ENCODE measurements at regions of chr19 and their contacts with region 1.

Region 1: DNA sequence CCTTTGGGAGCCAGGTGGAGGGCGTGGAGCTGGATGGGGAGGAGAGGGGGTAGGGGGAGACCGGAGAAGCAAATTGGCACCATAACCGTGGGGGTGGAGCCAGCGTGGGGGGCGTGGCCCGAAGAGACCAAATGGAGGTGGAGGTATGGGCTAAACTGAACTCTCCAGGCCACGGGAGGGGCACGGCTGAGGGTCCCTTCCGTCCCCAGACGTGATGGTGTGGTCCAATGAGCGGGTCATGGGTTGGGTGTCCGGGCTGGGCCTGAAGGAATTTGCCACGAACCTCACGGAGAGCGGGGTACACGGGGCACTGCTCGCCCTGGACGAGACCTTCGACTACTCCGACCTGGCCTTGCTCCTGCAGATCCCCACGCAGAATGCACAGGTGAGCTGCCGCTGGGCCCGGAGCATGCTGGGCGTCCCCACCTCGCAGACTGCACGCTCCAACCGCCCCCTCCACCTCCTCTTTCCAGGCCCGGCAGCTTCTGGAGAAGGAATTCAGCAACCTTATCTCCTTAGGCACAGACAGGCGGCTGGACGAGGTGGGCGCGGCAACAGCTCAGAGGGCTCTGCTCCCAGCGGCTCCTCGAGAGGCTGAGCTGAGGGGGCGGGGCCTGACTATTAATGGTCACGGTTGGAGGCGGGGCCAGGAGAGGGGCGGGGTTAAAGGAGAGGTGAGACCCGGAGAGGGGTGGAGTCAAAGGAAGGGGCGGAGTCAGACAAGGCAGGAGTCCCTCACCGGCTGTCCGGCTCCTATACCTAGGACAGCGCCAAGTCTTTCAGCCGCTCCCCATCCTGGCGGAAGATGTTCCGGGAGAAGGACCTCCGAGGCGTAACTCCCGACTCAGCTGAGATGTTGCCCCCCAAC is 6.2 kb downstream of the HRC start:
- DNase-seq: peak; percentile 97
- H3K4me3 ChIP-seq: peak overlapping the region; percentile 47 to 72 (median 64)
- H3K27ac ChIP-seq: peak overlapping the region; percentile 76 to 85 (median 79)
- H3K4me1 ChIP-seq: peaks cover 0 to 50% (median 43%) of the 10 kb centered on the region in 4 donors
- H3K27me3 ChIP-seq: peaks cover 0 to 2% (median 0%) of the 10 kb centered on the region in 3 donors
- CTCF ChIP-seq: no peak
- EP300 ChIP-seq: no peak
- POLR2A ChIP-seq: peak in 1 of 2 donors; percentile 74

Region 2: DNA sequence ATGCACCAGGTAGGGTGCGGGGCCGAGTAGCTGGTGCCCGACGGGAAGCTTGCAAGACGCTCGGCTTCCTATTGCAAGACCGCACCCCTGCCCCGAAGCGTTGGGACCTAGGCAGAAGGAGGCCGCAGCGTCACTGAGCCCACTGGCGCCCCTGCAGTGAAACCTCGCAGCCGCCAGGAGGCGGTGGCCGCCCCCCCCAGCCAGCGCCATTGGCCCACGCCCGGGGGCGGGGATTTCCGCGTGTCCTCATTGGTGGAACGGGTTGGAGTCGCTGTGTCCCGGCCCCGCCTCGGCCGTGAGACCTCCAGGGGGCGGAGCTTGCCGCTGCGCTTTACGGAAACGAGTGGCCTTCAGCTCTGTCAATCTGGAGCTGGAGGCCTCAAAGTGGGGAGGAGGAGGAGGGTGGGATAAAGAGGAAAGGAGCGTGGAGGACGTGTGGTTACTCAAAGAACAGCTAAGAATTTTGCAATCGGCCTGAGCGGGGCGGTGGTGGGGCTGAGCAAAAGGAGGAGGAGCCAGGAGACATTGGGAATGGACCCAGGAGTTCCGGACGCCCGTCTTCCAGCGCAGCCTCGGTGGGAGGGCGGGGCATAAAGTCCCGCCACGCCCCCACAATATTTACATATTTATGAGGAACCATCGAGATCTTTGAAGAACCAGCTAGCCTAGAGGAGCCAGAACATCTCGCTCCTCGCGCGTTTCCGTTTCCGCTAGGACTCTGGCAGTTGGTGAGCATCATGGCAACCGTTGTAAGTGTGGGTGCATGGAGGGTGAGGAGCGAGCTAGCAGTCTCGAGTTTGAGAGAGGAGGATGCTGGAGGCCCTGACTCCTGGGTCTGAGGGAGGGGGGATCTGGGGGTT is 155.6 kb before region 1 on chr19 and contains the starts of genes GYS1 and RUVBL2:
- intact Hi-C with region 1: loop called (anchors 5 kb)
- DNase-seq: peak; percentile 100
- H3K4me3 ChIP-seq: peak within 1 kb of the TSS; percentile 58 to 76 (median 67)
- H3K27ac ChIP-seq: peak within 1 kb of the TSS; percentile 88 to 97 (median 90)
- H3K4me1 ChIP-seq: peaks cover 0 to 42% (median 37%) of the 10 kb centered on the region in 4 donors
- H3K27me3 ChIP-seq: no peaks in the 10 kb centered on the region
- CTCF ChIP-seq: peak; percentile 96 to 99 (median 98)
- EP300 ChIP-seq: peak in 1 of 4 donors; percentile 66
- POLR2A ChIP-seq: peak; percentile 87 to 94
- total RNA-seq, gene GYS1: 11.7 to 19.4 (median 17.8) TPM
- total RNA-seq, gene RUVBL2: 49.3 to 82.3 (median 64.0) TPM

Region 3: GRCh38 chr19:49097455-49098288 is 51.3 kb before region 1 on chr19:
- intact Hi-C with region 1: loop called (anchors 1 kb)
- DNase-seq: peak; percentile 79
- H3K4me3 ChIP-seq: no peak overlapping the region
- H3K27ac ChIP-seq: peak overlapping the region in 1 of 4 donors; percentile 30
- H3K4me1 ChIP-seq: no peaks in the 10 kb centered on the region
- H3K27me3 ChIP-seq: no peaks in the 10 kb centered on the region
- CTCF ChIP-seq: peak; percentile 92 to 99 (median 96)
- EP300 ChIP-seq: no peak
- POLR2A ChIP-seq: no peak

Region 4: GRCh38 chr19:49205114-49205513 is 56.1 kb after region 1 on chr19:
- intact Hi-C with region 1: loop called (anchors 5 kb)
- DNase-seq: no peak
- H3K4me3 ChIP-seq: no peak overlapping the region
- H3K27ac ChIP-seq: no peak overlapping the region
- H3K4me1 ChIP-seq: peaks cover 0 to 8% (median under 1%) of the 10 kb centered on the region in 4 donors
- H3K27me3 ChIP-seq: no peaks in the 10 kb centered on the region
- CTCF ChIP-seq: no peak
- EP300 ChIP-seq: no peak
- POLR2A ChIP-seq: no peak